Right ventricle myocardium inferior (tissue), 1 donor: ENCODE measurements at regions of chr12 and their contacts with region 1.

Region 1: GRCh38 chr12:57887631-57888408 is 41.3 kb upstream of the CTDSP2 start:
- DNase-seq: no peak
- ATAC-seq: no peak

Region 2: GRCh38 chr12:57352166-57352565 is 535.7 kb before region 1 on chr12:
- intact Hi-C with region 1: no loop called
- DNase-seq: no peak
- ATAC-seq: no peak

Region 3: DNA sequence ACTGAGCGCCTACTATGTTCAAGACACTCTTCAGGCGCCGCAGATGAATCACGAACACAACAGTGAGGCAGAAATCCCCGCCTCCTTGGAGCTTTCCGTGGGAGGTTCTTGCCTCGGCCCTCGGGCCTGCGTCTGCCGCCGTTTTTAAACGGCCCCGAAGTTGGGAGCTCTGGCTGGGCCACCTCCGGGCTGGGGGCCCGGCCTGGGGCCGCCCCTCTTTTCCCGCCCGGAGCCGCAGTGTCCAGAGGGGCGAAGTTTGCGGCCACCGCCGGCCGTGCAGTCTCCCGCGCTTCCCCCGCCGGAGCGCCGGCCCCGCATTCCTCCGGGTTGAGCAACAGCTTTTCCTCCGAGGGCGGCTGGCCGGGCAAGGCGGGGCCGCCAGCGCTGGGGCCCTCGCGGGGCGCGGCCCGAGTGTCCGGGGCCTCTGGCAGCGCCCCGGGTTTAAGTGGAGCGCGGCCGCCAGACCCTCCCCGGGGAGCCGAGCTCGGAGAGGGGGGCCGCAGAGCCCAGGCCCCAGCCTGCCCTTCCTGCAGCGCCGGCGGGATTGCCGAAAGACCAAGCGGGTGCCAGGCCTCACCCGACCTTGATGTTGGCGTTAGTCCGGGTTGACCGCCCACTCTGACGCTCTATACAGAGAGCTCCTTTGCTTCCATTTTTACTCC is 22.6 kb before region 1 on chr12:
- intact Hi-C with region 1: loop called (anchors 2 kb)
- DNase-seq: peak; percentile 91
- ATAC-seq: peak; percentile 92